Activated CD8-positive, alpha-beta T cell treated with anti-CD3 and anti-CD28 coated beads for 36 hours (primary cell): ENCODE measurements at regions of chr4 and their contacts with region 1.

Region 1: DNA sequence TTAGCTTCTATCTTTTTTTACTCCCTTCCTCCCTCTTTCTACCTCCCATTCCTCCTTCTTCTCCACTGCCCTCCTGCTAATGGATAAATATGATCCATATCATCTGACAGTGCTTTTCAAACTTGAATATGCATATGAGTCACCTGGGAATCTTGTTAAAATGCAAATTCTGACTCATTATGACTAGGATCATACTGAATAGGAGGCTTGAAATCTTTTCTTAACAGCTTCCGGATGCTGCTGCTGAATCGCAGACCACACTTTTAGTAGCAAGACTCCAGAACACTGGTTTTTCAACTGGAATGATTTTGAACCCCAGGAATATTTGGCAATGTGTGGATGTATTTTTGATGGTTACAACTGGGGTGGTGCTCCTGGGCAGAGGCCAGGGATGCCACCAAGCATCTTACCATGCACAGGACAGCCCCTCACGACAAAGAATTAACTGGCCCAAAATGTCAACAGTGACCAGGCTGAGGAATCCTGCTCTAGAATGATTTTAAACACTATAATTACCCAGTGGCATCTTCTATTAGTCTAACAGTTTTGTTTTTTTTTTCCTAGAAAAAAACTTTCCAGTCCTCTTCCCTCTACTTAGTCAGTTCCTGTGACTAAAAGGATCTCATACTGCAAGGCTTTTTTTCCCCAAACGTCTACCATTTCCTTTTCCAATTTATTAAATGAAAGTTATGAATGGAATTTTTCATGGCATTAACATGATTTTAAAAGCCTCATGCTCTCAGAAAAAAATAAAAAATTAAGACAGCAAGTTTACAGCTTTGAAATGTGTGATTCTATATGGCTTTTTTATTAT is 10.6 kb upstream of the PYURF start:
- DNase-seq: no peak
- ATAC-seq: no peak
- H3K4me3 Mint-ChIP-seq: no peak overlapping the region
- H3K27ac Mint-ChIP-seq: no peak overlapping the region
- H3K4me1 Mint-ChIP-seq: peaks cover 8% of the 10 kb centered on the region
- H3K27me3 Mint-ChIP-seq: no peaks in the 10 kb centered on the region
- CTCF ChIP-seq: no peak

Region 2: GRCh38 chr4:88514557-88515511 is 19.3 kb before region 1 on chr4:
- CTCF ChIA-PET with region 1: interaction called, 11 read pairs
- POLR2A ChIA-PET with region 1: no interaction called
- intact Hi-C with region 1: no loop called
- DNase-seq: no peak
- ATAC-seq: no peak
- H3K4me3 Mint-ChIP-seq: no peak overlapping the region
- H3K27ac Mint-ChIP-seq: no peak overlapping the region
- H3K4me1 Mint-ChIP-seq: no peaks in the 10 kb centered on the region
- H3K27me3 Mint-ChIP-seq: no peaks in the 10 kb centered on the region
- CTCF ChIP-seq: no peak

Region 3: DNA sequence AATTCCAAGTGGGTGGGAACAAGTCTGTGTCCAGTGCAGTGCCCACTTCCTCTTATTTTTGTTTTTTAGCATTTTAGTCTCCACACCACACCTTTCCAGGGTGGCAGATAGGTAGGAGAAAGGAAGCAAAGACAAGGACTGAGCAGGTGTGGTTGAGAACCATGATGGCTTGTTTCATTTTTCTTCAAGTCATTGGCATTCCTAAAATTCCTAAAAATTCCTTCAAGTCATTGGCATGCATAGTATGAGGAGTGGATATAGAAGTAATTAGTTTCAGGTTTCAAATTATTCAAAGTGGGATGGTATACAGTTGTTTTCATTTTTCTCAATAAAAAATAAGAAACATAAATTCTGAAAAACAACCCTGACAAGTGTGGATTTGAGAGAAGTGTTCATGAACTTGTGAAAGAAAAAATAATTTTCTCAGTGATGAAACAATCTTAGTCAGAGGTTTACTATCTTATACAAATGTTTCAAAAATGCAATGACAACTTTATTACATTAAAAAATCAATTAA is 35.9 kb after region 1 on chr4:
- CTCF ChIA-PET with region 1: interaction called, 10 read pairs
- POLR2A ChIA-PET with region 1: no interaction called
- intact Hi-C with region 1: no loop called
- DNase-seq: no peak
- ATAC-seq: no peak
- H3K4me3 Mint-ChIP-seq: no peak overlapping the region
- H3K27ac Mint-ChIP-seq: no peak overlapping the region
- H3K4me1 Mint-ChIP-seq: no peaks in the 10 kb centered on the region
- H3K27me3 Mint-ChIP-seq: peaks cover 7% of the 10 kb centered on the region
- CTCF ChIP-seq: no peak

Region 4: GRCh38 chr4:88646528-88647280 is 112.6 kb after region 1 on chr4:
- CTCF ChIA-PET with region 1: interaction called, 35 read pairs
- POLR2A ChIA-PET with region 1: no interaction called
- intact Hi-C with region 1: no loop called
- DNase-seq: no peak
- ATAC-seq: no peak
- H3K4me3 Mint-ChIP-seq: no peak overlapping the region
- H3K27ac Mint-ChIP-seq: no peak overlapping the region
- H3K4me1 Mint-ChIP-seq: peaks cover 49% of the 10 kb centered on the region
- H3K27me3 Mint-ChIP-seq: no peaks in the 10 kb centered on the region
- CTCF ChIP-seq: no peak

Region 5: DNA sequence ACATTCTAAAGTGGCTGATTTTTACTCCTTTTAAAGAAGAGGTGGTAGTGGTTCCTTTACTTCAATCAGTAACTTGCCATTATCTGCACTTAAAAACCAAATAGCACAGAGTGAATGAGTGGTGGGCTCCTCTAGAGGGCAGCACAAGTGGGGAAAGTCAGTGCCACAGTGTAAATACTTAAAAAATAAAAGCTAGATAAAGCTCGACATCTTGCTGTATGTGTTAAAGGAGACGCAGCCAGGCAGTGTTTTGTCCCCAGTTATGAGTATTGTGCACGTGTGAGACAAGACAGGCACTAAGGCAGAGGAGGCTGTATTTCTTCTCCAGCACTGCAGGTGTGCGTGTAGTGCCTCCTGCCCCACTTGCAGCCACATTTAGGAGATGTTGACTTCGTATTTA is 138.8 kb after region 1 on chr4:
- CTCF ChIA-PET with region 1: interaction called, 10 read pairs
- POLR2A ChIA-PET with region 1: no interaction called
- intact Hi-C with region 1: no loop called
- DNase-seq: peak; percentile 48
- ATAC-seq: peak; percentile 62
- H3K4me3 Mint-ChIP-seq: no peak overlapping the region
- H3K27ac Mint-ChIP-seq: no peak overlapping the region
- H3K4me1 Mint-ChIP-seq: peaks cover 7% of the 10 kb centered on the region
- H3K27me3 Mint-ChIP-seq: no peaks in the 10 kb centered on the region
- CTCF ChIP-seq: peak; percentile 57

Region 6: GRCh38 chr4:88792268-88792781 is 258.2 kb after region 1 on chr4:
- CTCF ChIA-PET with region 1: interaction called, 15 read pairs
- POLR2A ChIA-PET with region 1: interaction called, 4 read pairs
- intact Hi-C with region 1: loop called (anchors 10 kb)
- DNase-seq: no peak
- ATAC-seq: peak; percentile 85
- H3K4me3 Mint-ChIP-seq: no peak overlapping the region
- H3K27ac Mint-ChIP-seq: no peak overlapping the region
- H3K4me1 Mint-ChIP-seq: peaks cover 16% of the 10 kb centered on the region
- H3K27me3 Mint-ChIP-seq: no peaks in the 10 kb centered on the region
- CTCF ChIP-seq: no peak